Panc1 (cell line): ENCODE measurements at regions of chr7 and their contacts with region 1.

Region 1: GRCh38 chr7:72234086-72234485 is 178.1 kb downstream of the CALN1 start:
- DNase-seq: no peak
- ATAC-seq: no peak
- H3K4me3 ChIP-seq: no peak overlapping the region
- H3K27ac ChIP-seq: no peak overlapping the region
- H3K4me1 ChIP-seq: no peaks in the 10 kb centered on the region
- H3K27me3 ChIP-seq: no peaks in the 10 kb centered on the region
- CTCF ChIP-seq: no peak

Region 2: DNA sequence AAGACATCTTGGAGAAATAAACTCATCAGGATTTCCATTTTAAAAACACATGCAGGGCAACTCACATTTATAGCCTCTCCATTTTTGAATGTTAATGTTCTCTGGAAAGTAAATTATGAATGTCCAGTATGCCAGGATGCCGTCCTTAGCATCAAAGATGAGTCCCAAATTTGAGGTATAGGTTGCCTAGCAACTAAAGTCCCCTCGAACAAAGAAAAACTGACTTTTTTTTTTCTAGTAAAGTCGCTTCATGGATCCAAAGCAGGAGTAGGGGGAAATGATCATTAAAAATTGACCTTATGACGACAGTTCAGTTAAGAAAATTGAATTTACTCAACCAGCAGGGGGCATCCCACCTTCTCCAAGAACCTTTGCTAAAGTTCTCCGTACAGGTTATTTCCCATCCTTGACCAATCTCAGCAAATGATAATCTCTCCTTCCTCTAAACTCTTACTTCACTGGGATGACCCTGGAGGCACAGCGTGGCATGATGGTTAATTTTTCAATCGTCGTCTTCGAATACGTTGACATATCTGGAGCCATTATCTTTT is 50.3 kb before region 1 on chr7:
- CTCF ChIA-PET with region 1: no interaction called
- POLR2A ChIA-PET with region 1: no interaction called
- in situ Hi-C with region 1: no loop called
- intact Hi-C with region 1: no loop called
- DNase-seq: no peak
- ATAC-seq: no peak
- H3K4me3 ChIP-seq: no peak overlapping the region
- H3K27ac ChIP-seq: no peak overlapping the region
- H3K4me1 ChIP-seq: no peaks in the 10 kb centered on the region
- H3K27me3 ChIP-seq: peaks cover under 1% of the 10 kb centered on the region; the same call in 1 of the 2 replicates
- CTCF ChIP-seq: peak; percentile 61

Region 3: GRCh38 chr7:72435366-72435765 is 201.3 kb after region 1 on chr7:
- CTCF ChIA-PET with region 1: interaction called, 11 read pairs
- POLR2A ChIA-PET with region 1: no interaction called
- in situ Hi-C with region 1: no loop called
- intact Hi-C with region 1: no loop called
- DNase-seq: no peak
- ATAC-seq: no peak
- H3K4me3 ChIP-seq: no peak overlapping the region
- H3K27ac ChIP-seq: no peak overlapping the region
- H3K4me1 ChIP-seq: no peaks in the 10 kb centered on the region
- H3K27me3 ChIP-seq: no peaks in the 10 kb centered on the region
- CTCF ChIP-seq: no peak

Region 4: GRCh38 chr7:72709909-72710308 is 475.8 kb after region 1 on chr7:
- CTCF ChIA-PET with region 1: no interaction called
- POLR2A ChIA-PET with region 1: no interaction called
- in situ Hi-C with region 1: no loop called
- intact Hi-C with region 1: no loop called
- DNase-seq: no peak
- ATAC-seq: no peak
- H3K4me3 ChIP-seq: no peak overlapping the region
- H3K27ac ChIP-seq: no peak overlapping the region
- H3K4me1 ChIP-seq: no peaks in the 10 kb centered on the region
- H3K27me3 ChIP-seq: no peaks in the 10 kb centered on the region
- CTCF ChIP-seq: no peak